ENCODE measurements at regions of chr16 and their contacts with region 1.

Region 1: GRCh38 chr16:81767987-81768592 is 11.0 kb upstream of the PLCG2 start:
- DNase-seq: no peak
- ATAC-seq: no peak
- H3K4me3 ChIP-seq: no peak overlapping the region
- H3K4me3 Mint-ChIP-seq: no peak overlapping the region
- H3K27ac ChIP-seq: no peak overlapping the region
- H3K27ac Mint-ChIP-seq: no peak overlapping the region
- H3K4me1 ChIP-seq: peaks cover 0 to 19% of the 10 kb centered on the region in 2 experiments
- H3K4me1 Mint-ChIP-seq: peaks cover 0 to 2% (median 0%) of the 10 kb centered on the region in 3 donors
- H3K27me3 ChIP-seq: peaks cover 0 to 2% of the 10 kb centered on the region in 2 experiments
- H3K27me3 Mint-ChIP-seq: peaks cover 5 to 7% of the 10 kb centered on the region in 2 donors

Region 2: GRCh38 chr16:81901483-81901882 is 133.4 kb after region 1 on chr16:
- CTCF ChIA-PET with region 1: interaction called in 1 of 2 experiments, 10 read pairs
- POLR2A ChIA-PET with region 1: no interaction called
- DNase-seq: no peak
- ATAC-seq: no peak
- H3K4me3 ChIP-seq: no peak overlapping the region
- H3K4me3 Mint-ChIP-seq: no peak overlapping the region
- H3K27ac ChIP-seq: no peak overlapping the region
- H3K27ac Mint-ChIP-seq: no peak overlapping the region
- H3K4me1 ChIP-seq: no peaks in the 10 kb centered on the region
- H3K4me1 Mint-ChIP-seq: no peaks in the 10 kb centered on the region
- H3K27me3 ChIP-seq: no peaks in the 10 kb centered on the region
- H3K27me3 Mint-ChIP-seq: no peaks in the 10 kb centered on the region

Region 3: DNA sequence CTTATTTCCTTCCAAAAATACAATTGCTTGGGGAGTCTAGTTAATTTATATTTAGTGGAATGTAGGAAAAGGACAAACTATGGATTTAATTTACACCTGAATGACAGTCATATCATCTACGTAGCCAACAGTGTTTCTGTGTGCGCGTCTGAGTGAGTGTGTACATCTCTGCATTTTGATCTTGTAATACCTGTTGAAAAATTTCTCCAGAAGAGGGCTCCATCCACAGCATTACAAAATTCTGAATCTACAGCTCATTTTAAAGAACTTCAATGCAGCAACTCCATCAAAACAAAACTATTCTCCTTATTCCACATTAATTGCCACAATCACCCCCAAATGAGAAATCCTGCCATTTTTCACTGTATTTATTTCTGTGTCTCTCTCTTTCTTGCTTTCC is 862.6 kb after region 1 on chr16:
- CTCF ChIA-PET with region 1: no interaction called
- POLR2A ChIA-PET with region 1: no interaction called
- DNase-seq: peak in 1 of 35 experiments; percentile 23
- ATAC-seq: no peak
- H3K4me3 ChIP-seq: no peak overlapping the region
- H3K4me3 Mint-ChIP-seq: no peak overlapping the region
- H3K27ac ChIP-seq: no peak overlapping the region
- H3K27ac Mint-ChIP-seq: no peak overlapping the region
- H3K4me1 ChIP-seq: peaks cover 0 to 13% of the 10 kb centered on the region in 2 experiments
- H3K4me1 Mint-ChIP-seq: peaks cover 0 to 10% (median 0%) of the 10 kb centered on the region in 3 donors
- H3K27me3 ChIP-seq: peaks cover 3 to 29% of the 10 kb centered on the region in 2 experiments
- H3K27me3 Mint-ChIP-seq: peaks cover 48 to 53% of the 10 kb centered on the region in 2 donors

Measured in T-cell (primary cell).